ENCODE measurements at regions of chr19 and their contacts with region 1.

Region 1: GRCh38 chr19:4732680-4733114 is 9.1 kb upstream of the DPP9 start:
- DNase-seq: peak in 2 of 4 donors; percentile 33 to 62
- ATAC-seq: peak; percentile 93
- H3K4me3 ChIP-seq: no peak overlapping the region
- H3K27ac ChIP-seq: no peak overlapping the region
- H3K4me1 ChIP-seq: peaks cover 0 to 3% of the 10 kb centered on the region in 2 donors
- H3K27me3 ChIP-seq: peaks cover 0 to 23% of the 10 kb centered on the region in 2 donors
- CTCF ChIP-seq: peak; percentile 63

Region 2: GRCh38 chr19:4647676-4648644 is 84.7 kb before region 1 on chr19:
- intact Hi-C with region 1: no loop called
- DNase-seq: no peak
- ATAC-seq: peak; percentile 56
- H3K4me3 ChIP-seq: no peak overlapping the region
- H3K27ac ChIP-seq: peak overlapping the region; percentile 2 to 24
- H3K4me1 ChIP-seq: no peaks in the 10 kb centered on the region
- H3K27me3 ChIP-seq: no peaks in the 10 kb centered on the region
- CTCF ChIP-seq: no peak

Region 3: GRCh38 chr19:4791170-4792018 is 58.7 kb after region 1 on chr19 and contains the start of gene FEM1A:
- intact Hi-C with region 1: loop called in 1 of 2 experiments (anchors 5 kb)
- DNase-seq: peak; percentile 98 to 100 (median 100)
- ATAC-seq: peak; percentile 99
- H3K4me3 ChIP-seq: peak within 1 kb of the TSS; percentile 89 to 97
- H3K27ac ChIP-seq: peak within 1 kb of the TSS; percentile 76 to 93
- H3K4me1 ChIP-seq: peaks cover 5 to 43% of the 10 kb centered on the region in 2 donors
- H3K27me3 ChIP-seq: no peaks in the 10 kb centered on the region
- CTCF ChIP-seq: peak; percentile 96 to 100
- polyA plus RNA-seq, gene FEM1A: 1.7 to 2.3 (median 2.1) TPM

Measured in left lung (tissue), 14 donors.